MCF 10A (cell line): ENCODE measurements at regions of chr7 and their contacts with region 1.

Region 1: GRCh38 chr7:54944179-54944578 is 74.6 kb upstream of the EGFR start:
- DNase-seq: peak; percentile 21
- H3K4me3 Mint-ChIP-seq: no peak overlapping the region
- H3K27ac Mint-ChIP-seq: peak overlapping the region; percentile 4
- H3K4me1 Mint-ChIP-seq: peaks cover 24% of the 10 kb centered on the region
- H3K27me3 Mint-ChIP-seq: no peaks in the 10 kb centered on the region
- CTCF ChIP-seq: no peak

Region 2: GRCh38 chr7:54439391-54439790 is 504.8 kb before region 1 on chr7:
- CTCF ChIA-PET with region 1: no interaction called
- POLR2A ChIA-PET with region 1: no interaction called
- intact Hi-C with region 1: no loop called
- DNase-seq: no peak
- H3K4me3 Mint-ChIP-seq: no peak overlapping the region
- H3K27ac Mint-ChIP-seq: no peak overlapping the region
- H3K4me1 Mint-ChIP-seq: no peaks in the 10 kb centered on the region
- H3K27me3 Mint-ChIP-seq: no peaks in the 10 kb centered on the region
- CTCF ChIP-seq: no peak

Region 3: GRCh38 chr7:54961391-54961790 is 17.2 kb after region 1 on chr7:
- CTCF ChIA-PET with region 1: interaction called, 3 read pairs
- POLR2A ChIA-PET with region 1: interaction called, 63 read pairs
- intact Hi-C with region 1: no loop called
- DNase-seq: peak; percentile 67
- H3K4me3 Mint-ChIP-seq: no peak overlapping the region
- H3K27ac Mint-ChIP-seq: peak overlapping the region; percentile 77
- H3K4me1 Mint-ChIP-seq: peaks cover 30% of the 10 kb centered on the region
- H3K27me3 Mint-ChIP-seq: no peaks in the 10 kb centered on the region
- CTCF ChIP-seq: no peak

Region 4: GRCh38 chr7:54985405-54986330 is 41.5 kb after region 1 on chr7:
- CTCF ChIA-PET with region 1: no interaction called
- POLR2A ChIA-PET with region 1: interaction called, 11 read pairs
- intact Hi-C with region 1: no loop called
- DNase-seq: peak; percentile 81
- H3K4me3 Mint-ChIP-seq: peak overlapping the region; percentile 51
- H3K27ac Mint-ChIP-seq: peak overlapping the region; percentile 97
- H3K4me1 Mint-ChIP-seq: peaks cover 16% of the 10 kb centered on the region
- H3K27me3 Mint-ChIP-seq: no peaks in the 10 kb centered on the region
- CTCF ChIP-seq: no peak

Region 5: GRCh38 chr7:55381696-55382095 is 437.5 kb after region 1 on chr7:
- CTCF ChIA-PET with region 1: no interaction called
- POLR2A ChIA-PET with region 1: no interaction called
- intact Hi-C with region 1: no loop called
- DNase-seq: no peak
- H3K4me3 Mint-ChIP-seq: no peak overlapping the region
- H3K27ac Mint-ChIP-seq: no peak overlapping the region
- H3K4me1 Mint-ChIP-seq: no peaks in the 10 kb centered on the region
- H3K27me3 Mint-ChIP-seq: no peaks in the 10 kb centered on the region
- CTCF ChIP-seq: no peak